Sciatic nerve (tissue), 2 donors: ENCODE measurements at regions of chr3 and their contacts with region 1.

Region 1: DNA sequence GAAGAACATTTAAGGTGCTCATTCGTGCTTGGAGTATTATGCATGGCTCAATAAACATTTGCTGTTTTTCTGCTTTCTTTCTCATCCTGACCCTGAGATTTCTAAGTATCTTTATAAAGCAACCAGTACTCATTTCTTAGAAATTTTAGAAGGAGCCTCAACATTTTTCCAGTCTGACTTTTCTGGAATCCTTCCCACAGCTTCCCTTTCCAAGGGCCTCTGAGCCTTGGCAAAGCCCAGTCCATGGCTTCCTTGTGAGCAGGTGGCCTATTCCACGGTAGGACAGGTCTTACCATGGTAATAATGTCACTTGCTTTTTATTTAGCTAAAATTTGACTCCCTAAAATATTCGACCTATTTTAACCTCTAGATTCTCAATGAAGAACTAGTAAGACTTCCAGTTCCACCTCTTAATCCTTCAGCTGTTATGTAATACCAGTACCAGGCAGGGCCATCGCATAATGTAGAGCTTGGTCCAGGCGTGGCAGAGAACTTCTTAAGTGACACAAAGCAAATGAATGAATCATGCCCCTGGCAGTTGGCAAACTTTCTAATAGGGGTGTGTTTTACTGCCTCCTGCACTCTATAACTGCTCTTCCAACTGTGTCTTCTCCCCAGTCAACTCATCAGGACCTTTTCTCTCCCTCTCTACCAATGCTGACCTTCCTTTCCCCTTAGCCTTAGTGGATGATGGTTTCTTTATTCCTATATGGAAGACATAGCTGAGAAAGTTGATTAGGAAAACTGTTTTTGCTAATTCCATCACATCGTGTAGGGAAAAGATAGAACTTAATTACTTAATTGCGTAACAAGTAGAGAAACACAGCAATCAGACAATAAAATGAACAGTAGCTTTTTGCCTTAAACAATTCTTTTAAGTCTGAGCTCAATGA is 894 bp upstream of the TM4SF4 start:
- DNase-seq: no peak
- ATAC-seq: peak; percentile 75

Region 2: DNA sequence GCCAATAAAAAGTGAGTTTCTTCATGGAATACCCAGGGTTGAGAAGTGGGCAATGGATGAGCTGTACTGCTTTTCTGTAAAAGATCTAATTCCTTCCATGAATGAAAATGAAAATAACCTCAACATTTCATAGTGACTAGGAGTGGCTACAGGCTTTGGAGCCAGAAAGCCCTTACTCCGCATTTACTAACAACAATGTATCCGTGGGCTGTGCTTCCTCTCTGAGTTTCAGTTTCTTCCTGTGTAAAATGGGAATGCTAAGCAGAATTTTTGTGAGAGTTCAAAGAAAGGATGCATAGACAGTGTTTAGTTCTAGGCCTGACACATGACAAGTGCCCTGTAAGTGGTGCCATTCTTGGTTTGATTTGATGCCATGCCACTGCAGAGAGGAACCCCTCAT is 48.7 kb before region 1 on chr3:
- intact Hi-C with region 1: loop called (anchors 10 kb)
- DNase-seq: no peak
- ATAC-seq: peak; percentile 55